MCF 10A (cell line): ENCODE measurements at regions of chr20 and their contacts with region 1.

Region 1: DNA sequence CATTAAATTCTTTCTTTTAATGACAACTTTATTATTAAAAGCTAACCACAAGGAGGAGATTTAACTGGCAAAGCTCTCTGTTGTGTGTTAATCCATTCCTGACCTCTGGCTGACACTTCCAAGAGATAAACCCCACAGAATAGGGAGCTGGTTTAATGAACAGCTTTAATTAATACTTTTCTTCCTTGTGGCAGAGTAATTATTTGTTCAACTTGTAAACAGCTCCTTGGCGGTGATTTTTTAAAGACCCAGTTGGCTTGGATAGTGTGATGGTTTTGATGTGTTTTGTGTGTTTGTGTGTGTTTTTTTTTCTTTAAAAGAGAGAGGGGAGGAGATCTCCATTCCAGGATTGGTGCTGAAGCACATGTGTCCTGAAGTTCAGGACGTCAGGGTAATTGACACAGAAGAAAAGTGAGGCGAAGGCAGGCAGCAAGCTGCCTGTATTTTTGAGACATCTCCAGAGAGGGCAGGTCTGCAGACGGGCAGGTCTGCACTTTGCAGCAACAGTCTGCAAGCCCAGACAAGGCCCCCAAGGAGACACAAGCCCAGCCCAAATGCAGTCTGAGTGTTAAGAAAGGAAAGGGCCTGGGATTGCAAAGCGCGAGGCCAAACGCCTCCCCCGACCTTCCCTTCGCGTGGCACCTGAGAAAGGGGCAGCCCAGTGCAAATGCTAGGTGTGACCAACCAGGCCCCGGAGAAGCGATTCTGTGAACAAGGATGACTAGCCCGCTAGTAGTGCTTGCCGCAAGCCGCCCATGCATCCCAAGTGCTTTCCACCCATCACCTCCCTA is 230.7 kb downstream of the ZMYND8 start:
- DNase-seq: peak; percentile 90
- H3K4me3 Mint-ChIP-seq: peak overlapping the region; percentile 20
- H3K27ac Mint-ChIP-seq: peak overlapping the region; percentile 83
- H3K4me1 Mint-ChIP-seq: peaks cover 25% of the 10 kb centered on the region
- H3K27me3 Mint-ChIP-seq: no peaks in the 10 kb centered on the region
- CTCF ChIP-seq: no peak

Region 2: DNA sequence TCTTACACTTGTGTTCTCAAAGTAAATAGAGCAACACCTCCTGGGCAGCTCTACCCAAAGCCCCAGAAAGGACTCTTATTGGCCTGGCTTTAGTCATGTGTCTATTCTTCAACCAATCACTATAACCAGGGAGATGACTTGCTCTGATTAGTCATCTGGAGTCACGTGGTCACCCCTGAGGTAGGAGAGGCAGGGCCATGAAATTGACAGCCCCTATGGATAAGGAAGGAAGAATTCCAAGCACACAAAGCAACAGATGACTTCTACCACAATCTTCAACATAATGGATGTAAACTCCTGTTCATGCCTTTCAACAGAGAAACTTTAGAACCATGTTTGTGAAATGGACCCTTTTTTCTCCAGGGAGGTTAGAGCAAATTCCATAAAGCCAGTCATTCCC is 255.7 kb before region 1 on chr20:
- CTCF ChIA-PET with region 1: no interaction called
- POLR2A ChIA-PET with region 1: no interaction called
- intact Hi-C with region 1: no loop called
- DNase-seq: no peak
- H3K4me3 Mint-ChIP-seq: no peak overlapping the region
- H3K27ac Mint-ChIP-seq: no peak overlapping the region
- H3K4me1 Mint-ChIP-seq: no peaks in the 10 kb centered on the region
- H3K27me3 Mint-ChIP-seq: peaks cover 37% of the 10 kb centered on the region
- CTCF ChIP-seq: no peak

Region 3: DNA sequence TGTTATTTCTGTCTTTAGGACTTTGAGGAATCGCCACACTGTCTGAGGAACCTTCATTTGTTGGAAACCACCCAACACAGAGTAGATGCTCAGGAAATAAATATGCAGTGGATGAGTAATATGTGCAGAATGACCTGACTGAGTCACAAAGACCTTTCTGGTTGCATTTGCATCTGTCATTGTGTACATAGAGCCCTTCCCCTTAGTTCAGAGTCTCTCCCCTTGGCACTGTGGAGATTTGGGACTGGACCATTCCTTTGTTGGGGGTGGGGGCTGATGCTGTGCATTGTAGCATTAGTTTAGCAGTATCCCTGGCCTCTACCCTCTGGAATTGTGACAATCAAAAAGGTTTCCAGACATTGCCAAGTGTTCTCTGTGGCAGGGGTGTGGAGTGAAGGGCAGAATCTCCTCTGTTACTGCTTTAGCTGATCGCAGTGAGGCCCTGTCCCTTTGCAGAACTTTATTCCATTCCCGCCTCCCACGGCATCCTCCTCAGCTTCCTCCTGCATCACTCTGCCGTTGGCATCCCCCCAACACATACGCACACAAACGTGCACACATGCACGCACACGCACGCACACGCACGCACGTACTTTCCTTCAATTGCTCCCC is 166.6 kb before region 1 on chr20:
- CTCF ChIA-PET with region 1: interaction called, 3 read pairs
- POLR2A ChIA-PET with region 1: interaction called, 19 read pairs
- intact Hi-C with region 1: loop called (anchors 10 kb)
- DNase-seq: peak; percentile 89
- H3K4me3 Mint-ChIP-seq: no peak overlapping the region
- H3K27ac Mint-ChIP-seq: no peak overlapping the region
- H3K4me1 Mint-ChIP-seq: peaks cover 37% of the 10 kb centered on the region
- H3K27me3 Mint-ChIP-seq: no peaks in the 10 kb centered on the region
- CTCF ChIP-seq: no peak